T-cell (primary cell): ENCODE measurements at regions of chr11 and their contacts with region 1.

Region 1: GRCh38 chr11:14148653-14149273 is 186.2 kb downstream of the SPON1 start:
- DNase-seq: peak in 2 of 35 experiments; percentile 12 to 64
- ATAC-seq: peak; percentile 63 to 89 (median 78)
- H3K4me3 ChIP-seq: no peak overlapping the region
- H3K4me3 Mint-ChIP-seq: no peak overlapping the region
- H3K27ac ChIP-seq: no peak overlapping the region
- H3K27ac Mint-ChIP-seq: no peak overlapping the region
- H3K4me1 ChIP-seq: no peaks in the 10 kb centered on the region
- H3K4me1 Mint-ChIP-seq: peaks cover 4 to 9% (median 6%) of the 10 kb centered on the region in 3 donors
- H3K27me3 ChIP-seq: no peaks in the 10 kb centered on the region
- H3K27me3 Mint-ChIP-seq: no peaks in the 10 kb centered on the region

Region 2: GRCh38 chr11:13745165-13745564 is 403.6 kb before region 1 on chr11:
- CTCF ChIA-PET with region 1: no interaction called
- POLR2A ChIA-PET with region 1: interaction called in 1 of 2 experiments, 16 read pairs
- DNase-seq: no peak
- ATAC-seq: no peak
- H3K4me3 ChIP-seq: no peak overlapping the region
- H3K4me3 Mint-ChIP-seq: no peak overlapping the region
- H3K27ac ChIP-seq: no peak overlapping the region
- H3K27ac Mint-ChIP-seq: no peak overlapping the region
- H3K4me1 ChIP-seq: no peaks in the 10 kb centered on the region
- H3K4me1 Mint-ChIP-seq: no peaks in the 10 kb centered on the region
- H3K27me3 ChIP-seq: peaks cover 0 to 18% of the 10 kb centered on the region in 2 experiments
- H3K27me3 Mint-ChIP-seq: peaks cover 38 to 39% of the 10 kb centered on the region in 2 donors

Region 3: GRCh38 chr11:13772223-13773046 is 376.3 kb before region 1 on chr11:
- CTCF ChIA-PET with region 1: interaction called, 14 to 77 read pairs
- POLR2A ChIA-PET with region 1: no interaction called
- DNase-seq: peak in 21 of 35 experiments; percentile 1 to 87 (median 22)
- ATAC-seq: peak; percentile 69 to 82 (median 72)
- H3K4me3 ChIP-seq: no peak overlapping the region
- H3K4me3 Mint-ChIP-seq: no peak overlapping the region
- H3K27ac ChIP-seq: no peak overlapping the region
- H3K27ac Mint-ChIP-seq: no peak overlapping the region
- H3K4me1 ChIP-seq: no peaks in the 10 kb centered on the region
- H3K4me1 Mint-ChIP-seq: peaks cover 7 to 11% (median 10%) of the 10 kb centered on the region in 3 donors
- H3K27me3 ChIP-seq: no peaks in the 10 kb centered on the region
- H3K27me3 Mint-ChIP-seq: peaks cover 3% of the 10 kb centered on the region in 2 donors

Region 4: DNA sequence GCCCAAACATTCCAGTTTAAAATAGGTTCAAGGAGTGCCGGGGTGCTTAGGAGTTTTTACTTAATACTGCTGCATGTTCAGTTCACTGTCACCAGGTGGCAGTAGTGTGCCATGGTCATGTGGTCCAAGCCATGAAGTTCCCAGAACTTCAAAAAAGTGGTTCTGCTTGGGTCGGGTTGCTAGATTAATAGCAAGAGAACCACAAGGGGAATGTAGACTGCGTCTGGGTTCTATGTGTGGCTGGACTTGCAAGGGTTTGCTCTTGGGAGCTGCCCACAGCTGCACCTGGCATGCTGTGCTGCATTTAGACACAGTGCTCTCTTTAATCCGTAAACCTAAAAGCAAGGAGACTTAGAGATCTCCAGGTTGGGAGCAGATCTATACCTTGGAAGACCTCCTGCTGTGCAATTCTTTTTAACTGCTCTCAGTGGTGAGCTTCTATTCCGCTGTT is 192.8 kb before region 1 on chr11:
- CTCF ChIA-PET with region 1: interaction called, 22 to 34 read pairs
- POLR2A ChIA-PET with region 1: interaction called, 4 to 6 read pairs
- DNase-seq: peak in 34 of 35 experiments; percentile 25 to 90 (median 49)
- ATAC-seq: peak; percentile 57 to 81 (median 72)
- H3K4me3 ChIP-seq: no peak overlapping the region
- H3K4me3 Mint-ChIP-seq: no peak overlapping the region
- H3K27ac ChIP-seq: no peak overlapping the region
- H3K27ac Mint-ChIP-seq: no peak overlapping the region
- H3K4me1 ChIP-seq: peaks cover 0 to 3% of the 10 kb centered on the region in 2 experiments
- H3K4me1 Mint-ChIP-seq: peaks cover 0 to 5% (median 3%) of the 10 kb centered on the region in 3 donors
- H3K27me3 ChIP-seq: peaks cover 0 to 4% of the 10 kb centered on the region in 2 experiments
- H3K27me3 Mint-ChIP-seq: peaks cover 14 to 16% of the 10 kb centered on the region in 2 donors